ENCODE measurements at regions of chr19 and their contacts with region 1.

Region 1: DNA sequence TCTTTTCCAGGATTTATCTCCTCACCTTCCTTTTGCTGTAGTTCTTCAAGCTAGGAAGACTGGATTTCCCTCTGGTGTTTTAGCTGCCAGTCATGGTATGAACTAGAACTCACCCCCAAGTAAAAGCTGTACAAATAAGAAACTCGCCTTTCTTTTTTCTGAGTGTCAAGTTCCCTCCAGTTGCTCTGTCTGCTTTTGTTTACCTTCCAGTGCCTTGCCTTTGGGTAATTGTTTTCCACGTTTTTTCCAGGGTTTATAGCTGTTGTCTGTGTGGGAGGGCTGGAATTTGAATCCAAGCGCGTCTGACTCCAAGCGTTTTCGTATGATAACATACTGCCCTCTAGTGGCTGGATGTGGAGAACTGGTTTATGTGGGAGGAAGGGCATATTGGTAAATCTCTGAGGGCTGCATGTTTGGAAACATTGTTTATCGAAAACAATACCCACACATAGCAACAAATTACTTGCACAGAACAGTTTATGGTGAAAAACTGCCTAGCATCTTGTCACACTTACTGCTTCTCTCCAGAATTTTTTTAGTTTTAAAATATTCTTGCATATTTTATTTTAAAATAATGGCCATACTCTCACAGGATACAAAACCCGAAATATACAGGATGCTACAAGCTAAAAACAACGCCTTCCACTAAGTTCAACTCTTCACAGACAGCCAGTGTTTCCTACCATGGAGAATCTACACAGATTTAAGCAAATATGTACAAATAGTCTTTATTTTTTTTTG is 19.2 kb downstream of the RCN3 start:
- DNase-seq: no peak
- ATAC-seq: peak; percentile 76
- H3K4me3 Mint-ChIP-seq: peak overlapping the region; percentile 47
- H3K27ac Mint-ChIP-seq: no peak overlapping the region
- H3K4me1 Mint-ChIP-seq: peaks cover 8% of the 10 kb centered on the region
- H3K27me3 Mint-ChIP-seq: no peaks in the 10 kb centered on the region
- CTCF ChIP-seq: peak; percentile 52

Region 2: DNA sequence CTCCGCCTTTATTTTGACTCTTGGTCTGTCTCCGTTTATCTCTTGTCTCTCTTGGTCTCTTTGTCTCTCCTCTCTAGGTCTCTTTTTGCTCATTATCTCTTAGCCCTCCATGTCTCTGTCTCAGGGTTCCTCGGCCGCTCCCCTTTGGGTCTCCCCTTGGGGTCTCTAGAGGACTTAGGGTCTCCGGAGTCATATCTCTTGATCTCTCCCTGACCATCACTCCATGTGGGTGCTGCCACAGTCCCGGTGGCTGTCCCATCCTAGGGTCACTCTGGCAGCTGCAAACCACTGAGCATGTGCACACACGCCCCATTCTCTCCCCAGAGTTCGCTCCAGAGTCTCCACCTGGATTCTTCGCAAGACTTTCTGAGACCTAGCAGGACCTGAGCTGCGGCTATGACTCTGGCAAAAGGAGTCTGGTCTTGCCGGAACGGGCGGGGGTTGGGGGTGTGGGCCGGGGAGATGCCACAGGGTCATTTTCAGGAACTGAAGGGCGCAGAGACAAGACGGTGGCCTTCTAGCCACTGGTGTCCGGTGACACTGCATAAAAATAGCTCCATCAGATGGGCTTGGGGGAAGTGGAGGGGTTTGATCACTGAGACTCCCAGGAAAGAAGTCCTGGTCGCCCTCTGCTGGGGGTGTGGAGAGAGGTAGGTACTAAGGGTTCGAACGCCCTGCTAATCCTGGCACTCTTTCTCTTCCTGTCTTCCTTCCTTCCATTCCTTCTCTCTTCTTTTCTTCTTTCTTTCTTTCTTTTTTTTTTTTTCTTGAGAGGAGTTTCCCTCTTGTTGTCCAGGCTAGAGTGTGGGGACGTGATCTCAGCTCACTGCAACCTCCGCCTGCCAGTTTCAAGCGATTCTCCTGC is 473.2 kb before region 1 on chr19:
- CTCF ChIA-PET with region 1: no interaction called
- POLR2A ChIA-PET with region 1: no interaction called
- intact Hi-C with region 1: no loop called
- DNase-seq: no peak
- ATAC-seq: no peak
- H3K4me3 Mint-ChIP-seq: peak overlapping the region; percentile 2
- H3K27ac Mint-ChIP-seq: no peak overlapping the region
- H3K4me1 Mint-ChIP-seq: peaks cover 19% of the 10 kb centered on the region
- H3K27me3 Mint-ChIP-seq: peaks cover 50% of the 10 kb centered on the region
- CTCF ChIP-seq: no peak

Region 3: GRCh38 chr19:49224856-49225255 is 322.1 kb before region 1 on chr19:
- CTCF ChIA-PET with region 1: interaction called, 7 read pairs
- POLR2A ChIA-PET with region 1: no interaction called
- intact Hi-C with region 1: loop called (anchors 2 kb)
- DNase-seq: no peak
- ATAC-seq: peak; percentile 54
- H3K4me3 Mint-ChIP-seq: no peak overlapping the region
- H3K27ac Mint-ChIP-seq: no peak overlapping the region
- H3K4me1 Mint-ChIP-seq: peaks cover 6% of the 10 kb centered on the region
- H3K27me3 Mint-ChIP-seq: peaks cover 6% of the 10 kb centered on the region
- CTCF ChIP-seq: no peak

Region 4: GRCh38 chr19:49473868-49474544 is 73.0 kb before region 1 on chr19 and contains the start of gene FLT3LG:
- CTCF ChIA-PET with region 1: interaction called, 20 read pairs
- POLR2A ChIA-PET with region 1: no interaction called
- intact Hi-C with region 1: loop called (anchors 1 kb)
- DNase-seq: peak; percentile 92
- ATAC-seq: peak; percentile 45
- H3K4me3 Mint-ChIP-seq: peak within 1 kb of the TSS; percentile 92
- H3K27ac Mint-ChIP-seq: peak within 1 kb of the TSS; percentile 91
- H3K4me1 Mint-ChIP-seq: peaks cover 67% of the 10 kb centered on the region
- H3K27me3 Mint-ChIP-seq: no peaks in the 10 kb centered on the region
- CTCF ChIP-seq: peak; percentile 52
- total RNA-seq, gene FLT3LG: 15.4 and 17.7 TPM in 2 replicates

Region 5: GRCh38 chr19:49502866-49503581 is 44.0 kb before region 1 on chr19:
- CTCF ChIA-PET with region 1: interaction called, 5 read pairs
- POLR2A ChIA-PET with region 1: interaction called, 7 read pairs
- intact Hi-C with region 1: loop called (anchors 1 kb)
- DNase-seq: no peak
- ATAC-seq: no peak
- H3K4me3 Mint-ChIP-seq: no peak overlapping the region
- H3K27ac Mint-ChIP-seq: peak overlapping the region; percentile 83
- H3K4me1 Mint-ChIP-seq: peaks cover 53% of the 10 kb centered on the region
- H3K27me3 Mint-ChIP-seq: no peaks in the 10 kb centered on the region
- CTCF ChIP-seq: no peak

Region 6: GRCh38 chr19:49560358-49560900 is 13.4 kb after region 1 on chr19:
- CTCF ChIA-PET with region 1: interaction called, 11 read pairs
- POLR2A ChIA-PET with region 1: no interaction called
- intact Hi-C with region 1: no loop called
- DNase-seq: no peak
- ATAC-seq: peak; percentile 57
- H3K4me3 Mint-ChIP-seq: no peak overlapping the region
- H3K27ac Mint-ChIP-seq: peak overlapping the region; percentile 41
- H3K4me1 Mint-ChIP-seq: peaks cover 40% of the 10 kb centered on the region
- H3K27me3 Mint-ChIP-seq: no peaks in the 10 kb centered on the region
- CTCF ChIP-seq: no peak

Region 7: GRCh38 chr19:49727217-49728030 is 180.4 kb after region 1 on chr19:
- CTCF ChIA-PET with region 1: no interaction called
- POLR2A ChIA-PET with region 1: no interaction called
- intact Hi-C with region 1: no loop called
- DNase-seq: no peak
- ATAC-seq: no peak
- H3K4me3 Mint-ChIP-seq: no peak overlapping the region
- H3K27ac Mint-ChIP-seq: no peak overlapping the region
- H3K4me1 Mint-ChIP-seq: no peaks in the 10 kb centered on the region
- H3K27me3 Mint-ChIP-seq: peaks cover 3% of the 10 kb centered on the region
- CTCF ChIP-seq: no peak

Measured in activated B cell treated with CpG ODN at 0.5 μM for 24 hours (primary cell).